ENCODE measurements at regions of chr11 and their contacts with region 1.

Region 1: DNA sequence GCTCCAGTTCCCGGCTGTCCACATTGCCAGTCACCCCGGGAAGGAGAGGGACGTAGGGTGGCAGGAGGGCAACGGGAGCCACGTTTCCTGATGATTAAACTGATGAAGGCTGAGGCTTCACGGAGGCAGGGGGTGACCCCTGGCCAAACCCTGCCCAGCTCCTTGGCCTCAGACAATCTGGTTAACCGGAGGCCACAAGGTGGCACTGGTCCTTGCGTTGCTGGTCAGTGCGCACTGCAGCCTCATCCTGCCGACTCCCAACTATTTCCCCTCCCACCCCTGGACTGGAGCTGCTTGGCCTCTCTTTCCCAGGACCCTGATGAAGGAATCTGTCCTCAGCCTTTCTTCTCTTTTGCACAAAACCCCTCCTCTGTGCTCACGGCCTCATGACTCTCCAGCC is 75.3 kb downstream of the PDE2A start:
- DNase-seq: peak; percentile 72 to 76
- H3K4me3 ChIP-seq: no peak overlapping the region
- H3K4me3 Mint-ChIP-seq: no peak overlapping the region
- H3K27ac Mint-ChIP-seq: no peak overlapping the region
- H3K4me1 ChIP-seq: no peaks in the 10 kb centered on the region
- H3K4me1 Mint-ChIP-seq: no peaks in the 10 kb centered on the region
- H3K27me3 ChIP-seq: peaks cover 4% of the 10 kb centered on the region
- H3K27me3 Mint-ChIP-seq: peaks cover 25% of the 10 kb centered on the region
- CTCF ChIP-seq: peak; percentile 71 to 82

Region 2: DNA sequence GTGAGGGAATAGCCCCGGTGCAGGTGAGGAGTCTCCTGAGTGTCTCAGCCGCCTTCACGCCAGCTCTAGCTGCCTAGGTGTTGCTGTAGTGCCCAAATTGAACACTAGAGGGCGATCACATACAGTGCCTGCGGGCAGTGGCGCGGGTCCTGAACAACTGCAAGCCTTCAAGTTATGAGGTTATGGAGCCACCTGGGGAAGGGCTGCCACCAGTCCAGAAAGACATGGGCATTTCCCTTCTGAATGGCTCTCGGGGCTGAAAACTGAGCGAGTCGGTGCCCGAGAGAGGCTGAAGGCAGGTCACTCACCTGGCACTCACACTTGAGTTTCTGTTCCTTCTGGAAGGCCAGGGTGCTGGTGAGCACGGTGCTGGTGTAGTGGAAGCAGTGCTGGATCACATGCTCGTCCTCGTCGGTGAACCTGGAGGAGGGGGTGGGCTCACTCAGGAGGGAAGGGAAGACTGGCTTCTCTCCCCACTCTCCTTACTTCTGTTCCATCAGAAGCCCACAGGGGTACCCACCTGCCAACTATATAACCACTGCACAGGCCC is 13.1 kb before region 1 on chr11:
- CTCF ChIA-PET with region 1: interaction called, 35 read pairs
- POLR2A ChIA-PET with region 1: no interaction called
- intact Hi-C with region 1: no loop called
- DNase-seq: peak; percentile 75 to 86
- H3K4me3 ChIP-seq: no peak overlapping the region
- H3K4me3 Mint-ChIP-seq: no peak overlapping the region
- H3K27ac Mint-ChIP-seq: no peak overlapping the region
- H3K4me1 ChIP-seq: no peaks in the 10 kb centered on the region
- H3K4me1 Mint-ChIP-seq: no peaks in the 10 kb centered on the region
- H3K27me3 ChIP-seq: peaks cover under 1% of the 10 kb centered on the region; the same call in 1 of the 2 replicates
- H3K27me3 Mint-ChIP-seq: peaks cover 7% of the 10 kb centered on the region
- CTCF ChIP-seq: peak; percentile 97 to 98

Region 3: DNA sequence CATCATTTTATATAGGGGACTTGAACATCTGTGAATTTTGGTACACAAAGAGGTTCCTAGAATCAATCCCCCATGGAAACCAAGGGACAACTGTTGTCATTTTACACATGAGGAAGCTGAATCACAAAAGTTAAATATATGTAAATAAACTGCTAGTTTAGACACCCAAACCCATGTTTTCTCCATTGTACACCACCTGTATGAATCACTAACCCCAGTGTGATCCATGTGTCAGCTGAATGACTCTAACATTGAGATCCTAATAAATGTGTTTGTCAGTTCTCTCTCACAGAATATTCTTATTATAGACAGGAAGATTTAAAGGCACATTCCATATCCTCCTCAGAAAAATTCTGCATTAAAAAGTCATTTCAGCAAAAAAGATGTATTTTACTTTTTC is 298.6 kb after region 1 on chr11:
- CTCF ChIA-PET with region 1: no interaction called
- POLR2A ChIA-PET with region 1: no interaction called
- intact Hi-C with region 1: no loop called
- DNase-seq: no peak
- H3K4me3 ChIP-seq: no peak overlapping the region
- H3K4me3 Mint-ChIP-seq: no peak overlapping the region
- H3K27ac Mint-ChIP-seq: no peak overlapping the region
- H3K4me1 ChIP-seq: no peaks in the 10 kb centered on the region
- H3K4me1 Mint-ChIP-seq: no peaks in the 10 kb centered on the region
- H3K27me3 ChIP-seq: no peaks in the 10 kb centered on the region
- H3K27me3 Mint-ChIP-seq: no peaks in the 10 kb centered on the region
- CTCF ChIP-seq: no peak

Measured in Caco-2 (cell line).